BJ (cell line): ENCODE measurements at regions of chr1 and their contacts with region 1.

Region 1: GRCh38 chr1:159945483-159946241 is at the start of gene IGSF9:
- DNase-seq: no peak
- H3K4me3 ChIP-seq: peak within 1 kb of the TSS; percentile 25
- H3K27me3 ChIP-seq: peaks cover 18% of the 10 kb centered on the region
- CTCF ChIP-seq: peak; percentile 60
- polyA plus RNA-seq, gene IGSF9: not detected in 2 replicates

Region 2: GRCh38 chr1:159960721-159961381 is 15.2 kb after region 1 on chr1:
- CTCF ChIA-PET with region 1: interaction called, 25 read pairs
- POLR2A ChIA-PET with region 1: no interaction called
- DNase-seq: peak; percentile 88
- H3K4me3 ChIP-seq: peak overlapping the region; percentile 49
- H3K27me3 ChIP-seq: no peaks in the 10 kb centered on the region; the same call in 1 of the 2 replicates
- CTCF ChIP-seq: no peak